IMR-90 (cell line): ENCODE measurements at regions of chr4 and their contacts with region 1.

Region 1: DNA sequence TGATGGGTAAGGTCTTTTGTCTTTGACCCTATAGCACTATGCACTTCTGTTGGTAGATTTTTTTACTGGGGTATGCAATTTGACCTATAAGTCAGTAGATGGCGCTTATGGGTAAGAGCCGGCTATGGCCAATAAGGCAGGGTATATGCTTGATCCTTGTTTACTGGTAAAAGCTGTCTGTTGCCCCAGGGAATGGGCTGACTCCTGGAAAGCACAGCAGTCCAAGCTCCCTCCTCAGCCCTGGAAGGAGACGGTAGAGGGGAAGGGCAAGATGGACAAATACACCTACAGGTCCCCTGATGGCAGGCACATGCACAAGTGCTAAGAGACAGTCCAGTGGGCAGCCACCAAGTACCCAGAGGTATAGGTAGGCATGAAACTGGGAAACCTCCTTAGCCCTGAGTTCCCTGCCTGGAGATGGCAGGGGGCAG is 63.7 kb downstream of the ADAMTS3 start:
- DNase-seq: peak; percentile 58
- ATAC-seq: peak; percentile 98
- H3K4me3 ChIP-seq: no peak overlapping the region
- H3K27ac ChIP-seq: no peak overlapping the region
- H3K4me1 ChIP-seq: no peaks in the 10 kb centered on the region
- H3K27me3 ChIP-seq: no peaks in the 10 kb centered on the region; the same call in 1 of the 2 replicates
- CTCF ChIP-seq: peak; percentile 78
- POLR2A ChIP-seq: no peak
- RAD21 ChIP-seq: peak; percentile 79

Region 2: GRCh38 chr4:71783972-71784371 is 721.4 kb before region 1 on chr4 and contains the start of gene GC:
- CTCF ChIA-PET with region 1: no interaction called
- POLR2A ChIA-PET with region 1: no interaction called
- dilution Hi-C with region 1: no loop called
- in situ Hi-C with region 1: no loop called
- intact Hi-C with region 1: no loop called
- DNase-seq: no peak
- ATAC-seq: no peak
- H3K4me3 ChIP-seq: no peak within 1 kb of the TSS
- H3K27ac ChIP-seq: no peak within 1 kb of the TSS
- H3K4me1 ChIP-seq: no peaks in the 10 kb centered on the region
- H3K27me3 ChIP-seq: no peaks in the 10 kb centered on the region
- CTCF ChIP-seq: no peak
- POLR2A ChIP-seq: no peak
- RAD21 ChIP-seq: no peak
- total RNA-seq, gene GC: not detected in 2 replicates

Region 3: GRCh38 chr4:72451349-72451748 is 54.0 kb before region 1 on chr4:
- CTCF ChIA-PET with region 1: no interaction called
- POLR2A ChIA-PET with region 1: no interaction called
- dilution Hi-C with region 1: no loop called
- in situ Hi-C with region 1: no loop called
- intact Hi-C with region 1: no loop called
- DNase-seq: no peak
- ATAC-seq: no peak
- H3K4me3 ChIP-seq: no peak overlapping the region
- H3K27ac ChIP-seq: no peak overlapping the region
- H3K4me1 ChIP-seq: no peaks in the 10 kb centered on the region
- H3K27me3 ChIP-seq: no peaks in the 10 kb centered on the region
- CTCF ChIP-seq: no peak
- POLR2A ChIP-seq: no peak
- RAD21 ChIP-seq: no peak

Region 4: GRCh38 chr4:72525938-72526337 is 20.6 kb after region 1 on chr4:
- CTCF ChIA-PET with region 1: no interaction called
- POLR2A ChIA-PET with region 1: no interaction called
- dilution Hi-C with region 1: no loop called
- in situ Hi-C with region 1: no loop called
- intact Hi-C with region 1: no loop called
- DNase-seq: peak; percentile 43
- ATAC-seq: no peak; the same call in 1 of the 2 replicates
- H3K4me3 ChIP-seq: no peak overlapping the region
- H3K27ac ChIP-seq: no peak overlapping the region
- H3K4me1 ChIP-seq: no peaks in the 10 kb centered on the region
- H3K27me3 ChIP-seq: no peaks in the 10 kb centered on the region
- CTCF ChIP-seq: no peak
- POLR2A ChIP-seq: no peak
- RAD21 ChIP-seq: no peak

Region 5: DNA sequence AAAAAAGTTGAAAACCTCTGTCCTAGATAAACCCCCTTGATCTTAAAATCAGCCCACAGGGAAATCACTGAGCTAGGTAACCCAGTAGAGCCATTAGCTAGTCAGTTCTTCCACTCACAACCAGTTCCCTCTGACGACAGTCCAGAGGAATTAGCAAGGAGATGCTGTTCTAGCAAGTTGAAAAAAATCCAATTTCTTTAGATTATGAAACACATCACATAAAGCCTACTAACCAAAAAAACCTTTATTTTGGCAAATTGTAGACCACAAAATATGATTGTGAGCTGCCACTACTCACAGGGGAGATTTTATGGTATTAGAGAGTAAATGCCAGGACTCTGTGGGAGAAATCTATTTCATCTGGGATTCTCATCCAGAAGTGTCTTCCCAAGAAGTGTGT is 41.1 kb after region 1 on chr4:
- CTCF ChIA-PET with region 1: no interaction called
- POLR2A ChIA-PET with region 1: no interaction called
- dilution Hi-C with region 1: no loop called
- in situ Hi-C with region 1: no loop called
- intact Hi-C with region 1: no loop called
- DNase-seq: no peak
- ATAC-seq: no peak
- H3K4me3 ChIP-seq: no peak overlapping the region
- H3K27ac ChIP-seq: no peak overlapping the region
- H3K4me1 ChIP-seq: no peaks in the 10 kb centered on the region
- H3K27me3 ChIP-seq: no peaks in the 10 kb centered on the region
- CTCF ChIP-seq: no peak
- POLR2A ChIP-seq: no peak
- RAD21 ChIP-seq: no peak

Region 6: GRCh38 chr4:72786401-72786990 is 281.2 kb after region 1 on chr4:
- CTCF ChIA-PET with region 1: no interaction called
- POLR2A ChIA-PET with region 1: no interaction called
- dilution Hi-C with region 1: no loop called
- in situ Hi-C with region 1: no loop called
- intact Hi-C with region 1: loop called (anchors 10 kb)
- DNase-seq: no peak
- ATAC-seq: no peak
- H3K4me3 ChIP-seq: no peak overlapping the region
- H3K27ac ChIP-seq: no peak overlapping the region
- H3K4me1 ChIP-seq: no peaks in the 10 kb centered on the region
- H3K27me3 ChIP-seq: no peaks in the 10 kb centered on the region
- CTCF ChIP-seq: no peak
- POLR2A ChIP-seq: no peak
- RAD21 ChIP-seq: no peak

Region 7: GRCh38 chr4:72886602-72887001 is 381.3 kb after region 1 on chr4:
- CTCF ChIA-PET with region 1: no interaction called
- POLR2A ChIA-PET with region 1: no interaction called
- dilution Hi-C with region 1: no loop called
- in situ Hi-C with region 1: no loop called
- intact Hi-C with region 1: loop called (anchors 5 kb)
- DNase-seq: no peak
- ATAC-seq: 0 out of 2 replicates have a peak, but pooled peaks have one; percentile 40
- H3K4me3 ChIP-seq: no peak overlapping the region
- H3K27ac ChIP-seq: no peak overlapping the region
- H3K4me1 ChIP-seq: no peaks in the 10 kb centered on the region
- H3K27me3 ChIP-seq: no peaks in the 10 kb centered on the region
- CTCF ChIP-seq: peak; percentile 39
- POLR2A ChIP-seq: no peak
- RAD21 ChIP-seq: no peak

Region 8: GRCh38 chr4:73019462-73020047 is 514.2 kb after region 1 on chr4:
- CTCF ChIA-PET with region 1: interaction called, 3 read pairs
- POLR2A ChIA-PET with region 1: no interaction called
- dilution Hi-C with region 1: no loop called
- in situ Hi-C with region 1: loop called (anchors 5 kb)
- intact Hi-C with region 1: loop called (anchors 1 kb)
- DNase-seq: peak; percentile 47
- ATAC-seq: peak; percentile 27; the same call in 1 of the 2 replicates
- H3K4me3 ChIP-seq: no peak overlapping the region
- H3K27ac ChIP-seq: no peak overlapping the region
- H3K4me1 ChIP-seq: no peaks in the 10 kb centered on the region
- H3K27me3 ChIP-seq: no peaks in the 10 kb centered on the region; the same call in 1 of the 2 replicates
- CTCF ChIP-seq: peak; percentile 83
- POLR2A ChIP-seq: no peak
- RAD21 ChIP-seq: peak; percentile 80